ENCODE measurements at regions of chr2 and their contacts with region 1.

Region 1: GRCh38 chr2:207746131-207746530 is 23.6 kb downstream of the FZD5 start:
- DNase-seq: peak; percentile 74 to 87 (median 82)
- H3K4me3 ChIP-seq: no peak overlapping the region
- H3K27ac ChIP-seq: no peak overlapping the region
- H3K4me1 ChIP-seq: no peaks in the 10 kb centered on the region
- H3K27me3 ChIP-seq: no peaks in the 10 kb centered on the region

Region 2: DNA sequence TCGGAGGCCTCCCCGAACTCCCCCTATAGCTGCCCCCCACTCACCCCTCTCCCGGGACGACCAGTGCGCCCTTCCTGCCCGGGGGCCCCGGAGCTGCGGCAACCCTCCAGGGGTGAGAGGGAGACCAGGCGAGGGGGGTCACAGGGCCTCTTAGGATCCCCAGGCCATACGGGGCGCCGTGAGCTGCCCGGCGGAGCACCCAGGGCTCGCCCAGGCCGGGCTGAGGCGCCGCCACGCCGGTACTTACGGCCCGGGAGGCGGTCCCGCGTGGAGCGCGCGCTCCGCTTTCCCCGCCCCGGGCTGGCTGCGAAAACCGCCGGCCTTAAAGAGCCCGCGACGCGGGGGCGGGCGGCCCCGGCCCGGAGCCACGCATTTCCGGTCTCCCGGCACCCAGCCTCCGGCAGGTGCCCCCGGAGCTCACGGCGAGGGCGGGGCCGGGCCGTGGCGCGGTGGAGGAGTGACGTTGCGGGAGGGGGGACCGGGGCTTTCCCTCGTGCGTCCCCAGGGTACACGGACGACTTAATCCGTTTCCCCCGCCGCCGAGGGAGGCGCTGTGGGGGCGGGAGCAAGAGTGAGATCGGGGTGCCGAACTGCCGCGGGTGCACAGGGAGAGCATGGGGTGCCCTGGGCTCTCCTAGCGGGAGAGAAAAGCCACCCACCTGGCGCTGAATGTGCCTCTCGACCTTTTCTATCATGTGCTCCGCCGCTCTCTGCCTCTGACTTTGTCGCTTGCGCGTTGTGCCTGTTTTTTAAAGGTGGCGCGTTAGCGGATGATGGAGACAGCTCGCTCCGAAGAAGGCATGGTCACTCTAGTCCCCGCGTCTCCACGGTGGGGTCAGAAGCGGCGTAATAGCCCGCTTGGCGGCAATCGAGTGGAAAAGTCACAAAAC is 120.9 kb before region 1 on chr2 and contains the start of gene METTL21A:
- CTCF ChIA-PET with region 1: interaction called, 12 read pairs
- POLR2A ChIA-PET with region 1: interaction called, 5 read pairs
- DNase-seq: peak; percentile 95 to 98 (median 97)
- H3K4me3 ChIP-seq: peak within 1 kb of the TSS; percentile 78 to 96 (median 90)
- H3K27ac ChIP-seq: peak within 1 kb of the TSS; percentile 92 to 95
- H3K4me1 ChIP-seq: peaks cover 5 to 56% (median 30%) of the 10 kb centered on the region in 4 experiments
- H3K27me3 ChIP-seq: no peaks in the 10 kb centered on the region

Region 3: GRCh38 chr2:207807516-207807915 is 61.4 kb after region 1 on chr2:
- CTCF ChIA-PET with region 1: no interaction called
- POLR2A ChIA-PET with region 1: no interaction called
- DNase-seq: no peak
- H3K4me3 ChIP-seq: no peak overlapping the region
- H3K27ac ChIP-seq: no peak overlapping the region
- H3K4me1 ChIP-seq: peaks cover 0 to 32% (median 20%) of the 10 kb centered on the region in 4 experiments
- H3K27me3 ChIP-seq: no peaks in the 10 kb centered on the region

Region 4: DNA sequence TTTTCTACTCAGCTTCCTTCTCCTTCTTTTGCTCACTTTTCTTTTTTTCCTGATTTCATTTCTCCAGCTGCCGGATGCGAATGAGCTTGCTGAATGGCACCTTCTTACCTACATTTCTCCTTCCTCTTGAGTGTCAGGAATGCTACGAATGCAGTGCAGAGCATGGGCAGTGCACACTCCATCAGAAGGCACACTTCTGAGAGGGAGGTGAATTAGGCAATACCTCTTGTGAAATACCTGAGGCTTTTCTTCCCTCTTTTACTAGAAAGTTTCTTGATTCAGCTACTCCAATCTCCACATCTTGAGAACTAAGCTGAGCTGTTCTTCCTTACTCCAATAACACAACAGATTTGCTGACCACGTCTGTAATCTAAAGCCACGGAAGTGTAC is 228.1 kb after region 1 on chr2:
- CTCF ChIA-PET with region 1: interaction called, 33 read pairs
- POLR2A ChIA-PET with region 1: no interaction called
- DNase-seq: no peak
- H3K4me3 ChIP-seq: no peak overlapping the region
- H3K27ac ChIP-seq: no peak overlapping the region
- H3K4me1 ChIP-seq: peaks cover 2 to 31% (median 15%) of the 10 kb centered on the region in 4 experiments
- H3K27me3 ChIP-seq: no peaks in the 10 kb centered on the region

Region 5: DNA sequence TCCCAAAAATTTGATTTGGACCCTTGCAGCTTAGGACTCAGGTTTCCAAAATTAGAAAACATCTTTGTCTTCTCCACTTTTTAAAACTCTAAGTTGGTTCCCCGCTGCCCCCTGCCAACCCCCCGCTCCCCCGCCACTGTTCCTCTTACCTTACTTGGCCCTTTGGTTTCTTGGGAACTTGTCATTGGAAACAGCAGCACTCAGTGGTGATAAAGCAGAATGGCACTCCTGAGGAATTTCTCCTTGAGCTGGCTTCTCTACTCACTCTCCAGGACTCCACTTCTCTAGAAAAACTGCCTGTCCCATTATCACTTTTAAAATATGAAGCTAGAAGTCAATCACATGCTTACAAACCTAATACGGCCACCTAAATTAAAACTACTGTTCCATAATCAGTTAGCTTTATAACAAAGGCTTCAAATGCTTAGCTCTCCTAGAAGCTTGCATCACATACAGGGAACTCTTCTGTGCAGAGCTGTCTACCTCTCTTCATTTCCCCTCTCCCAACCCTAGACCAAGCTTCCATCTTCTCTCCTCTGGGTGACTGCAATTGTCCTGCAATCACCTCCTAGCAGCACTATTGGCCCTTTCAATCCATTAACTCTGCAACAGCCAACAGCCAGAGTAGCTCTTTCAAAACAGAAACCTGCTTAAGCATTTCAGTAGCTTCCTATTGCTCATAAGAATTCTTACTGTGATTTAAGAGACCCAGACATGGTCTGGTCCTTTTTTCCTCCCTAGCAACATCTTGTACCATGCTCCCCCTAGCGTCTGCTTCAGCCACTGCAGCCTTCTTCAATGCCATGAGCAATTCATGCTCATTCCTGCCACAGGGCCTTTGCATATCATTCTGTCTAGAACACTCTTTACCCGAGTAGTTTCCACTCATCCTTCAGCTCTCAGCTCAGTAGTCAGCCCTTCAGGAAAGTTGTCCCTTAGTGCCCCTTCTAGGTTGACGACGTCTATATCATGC is 294.4 kb after region 1 on chr2:
- CTCF ChIA-PET with region 1: interaction called, 88 read pairs
- POLR2A ChIA-PET with region 1: no interaction called
- DNase-seq: peak; percentile 66 to 85 (median 82)
- H3K4me3 ChIP-seq: no peak overlapping the region
- H3K27ac ChIP-seq: no peak overlapping the region
- H3K4me1 ChIP-seq: no peaks in the 10 kb centered on the region
- H3K27me3 ChIP-seq: no peaks in the 10 kb centered on the region

Region 6: DNA sequence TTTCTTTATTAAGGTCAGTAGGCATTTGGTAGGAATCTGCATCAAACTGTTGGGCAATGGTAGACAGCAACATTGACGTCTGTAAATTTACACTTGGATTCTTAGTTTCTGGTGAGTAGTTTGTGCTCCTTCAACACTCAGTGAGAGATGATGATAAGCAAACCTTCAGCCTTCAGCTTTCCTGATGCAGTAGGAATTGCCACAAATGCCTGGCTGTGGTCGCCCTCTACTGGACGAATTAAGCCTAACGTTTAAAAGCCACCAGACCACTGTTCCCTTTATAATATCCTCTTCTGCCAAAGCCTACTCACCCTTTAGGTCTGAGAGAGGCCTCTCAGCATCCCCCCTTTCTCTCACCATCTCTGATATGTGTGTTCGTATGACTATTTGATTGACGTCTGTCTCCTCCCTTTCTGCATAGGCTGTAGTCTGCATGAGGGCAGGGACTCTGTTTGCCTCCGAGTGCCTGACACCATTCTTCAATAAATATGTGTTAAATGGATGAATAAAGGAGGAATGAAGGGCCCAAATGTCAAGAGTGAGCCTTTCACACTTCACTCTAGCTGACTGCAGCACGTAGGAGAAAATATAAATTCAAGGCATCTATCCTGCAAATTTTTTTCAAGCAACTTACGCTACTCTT is 326.2 kb after region 1 on chr2:
- CTCF ChIA-PET with region 1: interaction called, 24 read pairs
- POLR2A ChIA-PET with region 1: no interaction called
- DNase-seq: peak; percentile 71 to 83 (median 77)
- H3K4me3 ChIP-seq: no peak overlapping the region
- H3K27ac ChIP-seq: no peak overlapping the region
- H3K4me1 ChIP-seq: peaks cover 0 to 3% (median 0%) of the 10 kb centered on the region in 4 experiments
- H3K27me3 ChIP-seq: no peaks in the 10 kb centered on the region